ENCODE measurements at regions of chr5 and their contacts with region 1.

Region 1: DNA sequence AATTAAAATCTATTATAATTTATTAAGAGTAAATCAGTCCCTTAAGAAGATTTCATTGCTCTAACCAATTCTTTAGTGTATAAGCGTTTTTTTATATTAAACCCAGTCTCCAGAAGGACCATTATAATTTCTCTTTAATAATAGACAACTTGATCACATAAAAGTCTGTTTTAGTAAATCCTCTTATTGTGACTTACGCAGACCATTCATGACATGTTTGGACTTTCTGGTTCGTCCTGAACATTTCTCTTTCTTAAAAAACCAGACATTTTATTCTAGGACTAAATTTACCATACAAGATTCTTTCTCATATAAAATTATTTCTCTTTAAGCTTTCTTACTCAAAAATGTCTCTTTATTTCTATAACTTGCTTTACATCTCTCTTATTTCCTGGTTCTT is 196.2 kb upstream of the RAI14 start:
- DNase-seq: no peak
- ATAC-seq: no peak
- H3K4me3 ChIP-seq: no peak overlapping the region
- H3K27ac ChIP-seq: no peak overlapping the region
- H3K4me1 ChIP-seq: no peaks in the 10 kb centered on the region
- H3K27me3 ChIP-seq: no peaks in the 10 kb centered on the region
- CTCF ChIP-seq: no peak

Region 2: DNA sequence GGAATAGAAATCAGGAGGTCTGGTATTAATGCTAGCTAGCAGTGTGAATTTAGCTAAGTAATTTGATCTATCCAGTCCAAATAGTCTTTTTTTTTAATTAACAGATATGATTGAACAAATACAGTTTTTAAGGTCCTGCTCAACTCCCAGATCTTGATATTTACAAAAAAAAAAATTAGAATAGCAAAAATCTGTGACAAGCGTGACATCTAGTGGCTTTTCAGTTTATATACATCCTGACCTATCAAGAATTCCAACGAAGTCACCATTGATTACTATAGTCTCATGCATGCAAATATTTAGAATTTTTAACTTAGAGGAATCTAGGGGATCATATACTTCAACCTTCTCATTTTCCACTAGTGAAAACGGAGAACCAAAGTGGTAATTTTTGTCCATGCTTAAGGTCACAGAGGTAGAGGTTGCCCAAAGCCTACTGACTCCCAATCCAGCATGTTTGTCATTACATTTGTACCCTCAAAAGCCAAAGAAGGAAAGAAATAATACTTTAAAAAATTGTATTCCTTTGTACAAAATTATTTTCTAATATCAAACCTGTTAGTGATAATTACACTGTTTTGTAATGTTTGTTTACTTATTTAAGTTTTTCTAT is 1036.8 kb before region 1 on chr5:
- intact Hi-C with region 1: loop called in 1 of 10 experiments (anchors 10 kb)
- DNase-seq: no peak
- ATAC-seq: peak in 2 of 8 donors; percentile 21 to 59
- H3K4me3 ChIP-seq: no peak overlapping the region
- H3K27ac ChIP-seq: no peak overlapping the region
- H3K4me1 ChIP-seq: peaks cover 0 to 5% (median 0%) of the 10 kb centered on the region in 9 donors
- H3K27me3 ChIP-seq: peaks cover 0 to 2% (median 0%) of the 10 kb centered on the region in 7 donors
- CTCF ChIP-seq: peak in 7 of 9 donors; percentile 21 to 65 (median 54)

Region 3: DNA sequence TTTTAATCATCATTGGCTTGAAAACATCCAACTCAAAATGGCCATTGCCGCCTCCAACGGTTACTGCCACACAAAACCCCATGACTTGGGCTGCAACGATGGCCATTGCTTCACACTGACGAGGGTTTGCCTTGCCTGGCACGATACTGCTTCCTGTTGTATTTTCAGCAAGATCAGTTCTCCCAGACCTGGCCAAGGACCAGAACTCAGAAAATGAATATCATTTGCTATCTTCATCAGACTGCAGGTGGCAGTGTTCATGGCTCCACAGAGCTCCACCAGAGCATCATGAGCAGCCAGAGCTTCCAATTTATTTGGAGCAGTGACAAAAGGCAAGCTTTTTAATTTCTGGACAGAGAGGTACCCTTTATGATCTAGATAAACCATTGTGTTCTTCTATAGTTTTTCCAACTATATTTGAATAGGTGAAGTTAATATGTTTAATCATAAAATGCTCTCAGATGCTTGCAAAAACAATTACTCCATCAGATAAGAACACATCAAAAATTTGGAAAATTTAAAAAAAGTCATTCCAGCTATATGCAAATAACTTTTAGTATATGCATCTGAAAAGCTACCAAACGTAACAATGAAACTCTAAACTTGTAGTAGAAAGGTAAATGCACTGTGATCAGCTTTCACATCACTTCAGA is 462.5 kb before region 1 on chr5:
- intact Hi-C with region 1: loop called in 9 of 10 experiments (anchors 2 to 10 kb)
- DNase-seq: peak in 1 of 2 donors; percentile 54
- ATAC-seq: peak; percentile 43 to 86 (median 64)
- H3K4me3 ChIP-seq: no peak overlapping the region
- H3K27ac ChIP-seq: no peak overlapping the region
- H3K4me1 ChIP-seq: peaks cover 0 to 21% (median 0%) of the 10 kb centered on the region in 9 donors
- H3K27me3 ChIP-seq: no peaks in the 10 kb centered on the region
- CTCF ChIP-seq: peak in 8 of 9 donors; percentile 24 to 74 (median 64)

Region 4: DNA sequence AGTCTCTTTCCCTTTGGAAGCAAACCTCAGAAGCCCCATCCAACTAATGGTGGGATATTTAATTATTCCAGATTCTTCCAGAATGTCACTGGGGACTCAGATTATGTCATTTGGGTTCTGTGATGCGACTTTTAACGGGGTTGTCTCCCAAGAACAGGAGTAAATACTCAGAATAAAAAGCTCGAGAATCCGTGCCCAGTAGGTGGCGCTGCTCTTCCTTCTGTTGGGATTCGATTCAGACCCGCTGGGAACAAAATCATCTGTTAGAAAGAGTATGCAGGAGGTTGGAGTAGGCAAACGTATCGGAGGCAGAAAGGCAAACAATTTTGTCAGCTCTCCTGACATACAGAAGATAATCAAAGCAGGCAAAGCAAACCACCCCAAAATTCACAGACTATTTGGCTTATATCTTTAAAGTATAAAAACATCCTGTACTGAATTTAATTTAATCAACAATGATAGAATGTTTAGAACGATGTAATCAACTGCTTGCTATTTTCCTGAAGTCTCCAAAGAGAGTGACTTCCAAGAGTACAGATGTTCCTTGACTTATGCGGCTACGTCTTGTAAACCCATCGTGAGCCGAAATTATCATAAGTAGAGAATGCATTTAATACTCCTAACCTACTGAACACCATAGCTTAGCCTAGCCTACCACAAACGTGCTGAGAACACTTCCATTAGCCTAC is 26.4 kb after region 1 on chr5:
- intact Hi-C with region 1: no loop called
- DNase-seq: peak; percentile 78
- ATAC-seq: peak; percentile 65 to 91 (median 78)
- H3K4me3 ChIP-seq: no peak overlapping the region
- H3K27ac ChIP-seq: no peak overlapping the region
- H3K4me1 ChIP-seq: peaks cover 0 to 19% (median 7%) of the 10 kb centered on the region in 9 donors
- H3K27me3 ChIP-seq: no peaks in the 10 kb centered on the region
- CTCF ChIP-seq: peak; percentile 62 to 86 (median 83)

Measured in heart right ventricle (tissue), 16 donors.